Calu3 (cell line): ENCODE measurements at regions of chr6 and their contacts with region 1.

Region 1: GRCh38 chr6:7238900-7239589 is 74.0 kb downstream of the SSR1 start:
- DNase-seq: peak; percentile 86
- H3K4me3 Mint-ChIP-seq: no peak overlapping the region
- H3K27ac Mint-ChIP-seq: no peak overlapping the region
- H3K4me1 Mint-ChIP-seq: peaks cover 72% of the 10 kb centered on the region
- H3K27me3 Mint-ChIP-seq: no peaks in the 10 kb centered on the region
- CTCF ChIP-seq: no peak

Region 2: DNA sequence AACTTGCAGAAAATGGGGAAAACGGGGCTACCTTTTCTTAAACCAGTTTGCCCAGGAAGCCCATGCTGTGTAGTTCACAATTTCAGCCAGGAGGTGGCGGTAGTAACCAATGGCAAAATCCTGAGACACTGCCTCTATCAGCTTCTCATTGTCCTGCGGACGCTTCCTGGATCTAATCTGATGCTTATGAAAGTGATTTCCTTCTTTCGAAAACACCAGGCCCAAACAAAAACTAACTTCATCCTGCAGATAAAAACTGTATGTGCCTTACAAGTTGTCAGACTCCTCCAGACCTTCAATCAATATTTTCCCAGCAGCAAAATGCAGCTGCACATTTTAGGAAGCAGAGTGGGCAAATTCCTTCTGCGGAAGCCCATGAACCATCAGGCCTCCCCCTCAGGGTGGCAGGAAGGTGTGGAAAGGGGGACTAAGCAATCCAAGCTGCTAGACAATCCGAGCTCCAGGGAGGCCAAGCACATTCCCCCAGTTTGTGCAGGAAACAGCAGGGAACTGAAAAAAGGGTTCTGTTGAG is 562.1 kb before region 1 on chr6:
- CTCF ChIA-PET with region 1: interaction called, 3 read pairs
- intact Hi-C with region 1: loop called (anchors 5 kb)
- DNase-seq: peak; percentile 71
- H3K4me3 Mint-ChIP-seq: no peak overlapping the region
- H3K27ac Mint-ChIP-seq: no peak overlapping the region
- H3K4me1 Mint-ChIP-seq: peaks cover 20% of the 10 kb centered on the region
- H3K27me3 Mint-ChIP-seq: peaks cover 12% of the 10 kb centered on the region
- CTCF ChIP-seq: peak; percentile 76

Region 3: DNA sequence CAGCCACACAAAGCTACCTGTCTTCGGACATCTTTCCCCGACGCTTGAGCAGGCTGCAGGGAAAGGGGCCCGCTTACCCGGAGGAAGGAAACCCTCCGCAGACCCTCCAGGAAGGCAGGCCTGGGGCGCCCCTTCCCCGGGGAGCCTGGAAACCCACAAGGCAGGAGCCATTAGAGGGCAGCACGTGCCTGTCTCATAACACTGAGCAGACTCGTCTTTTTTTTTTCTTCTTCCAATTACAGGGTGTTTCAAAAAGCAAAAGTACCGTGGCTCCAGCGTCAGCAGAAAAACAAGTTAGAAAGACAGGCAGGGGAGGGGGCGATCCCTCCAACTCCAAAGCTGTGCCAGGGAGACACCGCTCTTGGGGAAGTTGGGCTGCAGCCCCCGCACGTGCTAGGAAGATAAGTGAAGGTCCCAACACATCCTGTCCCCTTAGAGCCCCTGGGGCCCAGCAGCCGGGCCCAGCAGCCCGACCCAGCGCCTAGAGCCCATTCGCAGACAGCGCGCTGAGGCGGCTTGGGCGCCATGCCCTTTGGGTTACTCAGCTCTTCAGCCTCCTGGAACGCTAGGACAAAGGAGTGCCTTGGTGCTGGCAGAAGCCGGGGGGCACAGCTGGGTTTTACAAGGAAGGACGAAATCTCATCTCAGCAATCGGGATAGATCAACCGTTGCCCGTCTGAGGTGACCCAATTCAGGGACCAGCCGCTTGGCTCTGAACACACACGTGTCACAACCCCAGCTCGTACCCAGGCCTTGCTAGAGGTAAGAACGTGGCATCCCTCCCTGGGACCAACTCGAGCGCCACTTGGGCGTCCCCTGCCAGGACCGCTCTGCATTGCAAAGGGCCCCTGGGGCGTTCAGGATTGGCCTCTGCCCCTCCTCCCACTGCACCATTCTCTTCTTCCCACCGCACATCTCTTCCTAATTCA is 514.2 kb before region 1 on chr6:
- CTCF ChIA-PET with region 1: interaction called, 6 read pairs
- intact Hi-C with region 1: loop called (anchors 5 kb)
- DNase-seq: peak; percentile 58
- H3K4me3 Mint-ChIP-seq: peak overlapping the region; percentile 62
- H3K27ac Mint-ChIP-seq: peak overlapping the region; percentile 77
- H3K4me1 Mint-ChIP-seq: peaks cover 37% of the 10 kb centered on the region
- H3K27me3 Mint-ChIP-seq: no peaks in the 10 kb centered on the region
- CTCF ChIP-seq: peak; percentile 47

Region 4: GRCh38 chr6:6811151-6812002 is 427.7 kb before region 1 on chr6:
- CTCF ChIA-PET with region 1: no interaction called
- intact Hi-C with region 1: loop called (anchors 10 kb)
- DNase-seq: peak; percentile 78
- H3K4me3 Mint-ChIP-seq: peak overlapping the region; percentile 63
- H3K27ac Mint-ChIP-seq: peak overlapping the region; percentile 99
- H3K4me1 Mint-ChIP-seq: peaks cover 34% of the 10 kb centered on the region
- H3K27me3 Mint-ChIP-seq: no peaks in the 10 kb centered on the region
- CTCF ChIP-seq: no peak

Region 5: DNA sequence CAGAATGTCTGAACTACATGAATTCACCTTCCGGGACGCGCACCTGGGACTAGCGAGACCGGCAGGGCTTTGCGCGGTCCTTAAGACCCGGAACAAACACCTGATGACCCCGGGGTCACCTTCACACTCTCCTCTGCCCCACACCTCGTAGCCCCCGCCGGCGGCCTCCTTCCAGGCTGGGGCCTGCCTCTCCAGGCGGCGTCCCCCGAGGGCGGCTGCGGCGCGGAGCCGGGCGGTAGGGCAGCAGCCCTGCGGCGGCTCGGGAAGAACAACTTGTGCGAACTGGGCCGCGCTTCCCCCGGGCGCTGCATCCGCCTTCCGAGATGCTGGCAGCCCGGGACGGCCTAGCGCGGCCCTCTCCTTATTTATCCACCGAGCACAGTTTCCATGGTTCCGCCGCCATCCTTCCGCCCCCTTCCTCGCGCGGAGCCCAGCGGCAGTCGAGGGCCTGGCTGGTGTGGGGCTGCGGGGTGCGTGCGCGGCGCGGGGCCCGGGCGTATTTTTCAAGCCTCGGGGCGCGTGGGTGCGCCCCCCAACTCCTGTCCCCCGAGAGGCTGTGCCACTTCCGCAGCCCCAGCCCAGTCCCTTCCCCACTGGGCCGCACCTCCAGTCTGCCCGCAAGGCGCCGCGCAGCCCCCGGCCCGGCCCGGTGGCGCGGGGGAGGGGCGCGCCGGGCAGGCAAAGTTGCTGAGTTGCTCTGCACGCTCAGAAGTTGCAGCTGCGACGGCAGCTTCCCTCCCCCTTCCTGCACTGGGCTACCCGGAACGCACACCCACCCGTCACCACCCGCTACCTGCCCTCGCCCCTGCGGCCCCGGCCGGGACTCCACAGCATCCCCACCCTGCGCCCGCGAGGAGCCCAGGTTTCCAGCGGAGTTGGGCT is 187.6 kb before region 1 on chr6:
- CTCF ChIA-PET with region 1: no interaction called
- intact Hi-C with region 1: loop called (anchors 5 kb)
- DNase-seq: peak; percentile 45
- H3K4me3 Mint-ChIP-seq: peak overlapping the region; percentile 60
- H3K27ac Mint-ChIP-seq: peak overlapping the region; percentile 80
- H3K4me1 Mint-ChIP-seq: peaks cover 11% of the 10 kb centered on the region
- H3K27me3 Mint-ChIP-seq: no peaks in the 10 kb centered on the region
- CTCF ChIP-seq: no peak

Region 6: DNA sequence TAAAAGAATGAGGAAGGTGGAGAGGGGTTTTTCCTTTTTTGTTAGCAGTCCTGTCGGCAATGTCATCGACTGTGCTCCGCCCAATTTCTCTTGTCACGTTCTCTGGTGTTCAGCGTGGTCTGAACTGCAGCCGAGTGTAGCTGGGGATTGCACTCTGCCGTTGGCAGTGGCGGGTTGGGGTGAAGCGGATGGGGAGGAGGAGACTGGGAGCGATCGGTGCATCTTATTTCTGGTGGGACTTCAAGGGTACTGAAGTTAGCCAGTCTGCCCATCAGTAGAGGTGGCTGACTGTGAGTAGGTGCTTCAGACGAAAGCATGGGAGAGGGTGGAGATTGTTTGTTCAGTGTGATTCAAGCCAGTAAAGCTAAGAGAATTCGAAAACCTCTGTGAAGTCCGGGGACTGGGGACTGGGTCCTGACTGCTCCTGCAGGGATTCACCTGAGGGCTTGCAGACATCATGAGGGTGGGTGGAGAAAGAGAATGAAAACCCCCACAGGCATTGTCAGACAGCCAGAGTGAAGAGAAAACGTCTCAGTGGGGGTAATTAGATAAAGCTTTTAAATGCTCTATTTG is 126.2 kb before region 1 on chr6:
- CTCF ChIA-PET with region 1: no interaction called
- intact Hi-C with region 1: loop called (anchors 5 kb)
- DNase-seq: peak; percentile 43
- H3K4me3 Mint-ChIP-seq: peak overlapping the region; percentile 77
- H3K27ac Mint-ChIP-seq: peak overlapping the region; percentile 77
- H3K4me1 Mint-ChIP-seq: peaks cover 28% of the 10 kb centered on the region
- H3K27me3 Mint-ChIP-seq: no peaks in the 10 kb centered on the region
- CTCF ChIP-seq: no peak

Region 7: GRCh38 chr6:7140631-7141378 is 98.2 kb before region 1 on chr6:
- CTCF ChIA-PET with region 1: interaction called, 4 read pairs
- intact Hi-C with region 1: loop called (anchors 10 kb)
- DNase-seq: peak; percentile 80
- H3K4me3 Mint-ChIP-seq: peak overlapping the region; percentile 64
- H3K27ac Mint-ChIP-seq: peak overlapping the region; percentile 71
- H3K4me1 Mint-ChIP-seq: peaks cover 33% of the 10 kb centered on the region
- H3K27me3 Mint-ChIP-seq: no peaks in the 10 kb centered on the region
- CTCF ChIP-seq: no peak

Region 8: DNA sequence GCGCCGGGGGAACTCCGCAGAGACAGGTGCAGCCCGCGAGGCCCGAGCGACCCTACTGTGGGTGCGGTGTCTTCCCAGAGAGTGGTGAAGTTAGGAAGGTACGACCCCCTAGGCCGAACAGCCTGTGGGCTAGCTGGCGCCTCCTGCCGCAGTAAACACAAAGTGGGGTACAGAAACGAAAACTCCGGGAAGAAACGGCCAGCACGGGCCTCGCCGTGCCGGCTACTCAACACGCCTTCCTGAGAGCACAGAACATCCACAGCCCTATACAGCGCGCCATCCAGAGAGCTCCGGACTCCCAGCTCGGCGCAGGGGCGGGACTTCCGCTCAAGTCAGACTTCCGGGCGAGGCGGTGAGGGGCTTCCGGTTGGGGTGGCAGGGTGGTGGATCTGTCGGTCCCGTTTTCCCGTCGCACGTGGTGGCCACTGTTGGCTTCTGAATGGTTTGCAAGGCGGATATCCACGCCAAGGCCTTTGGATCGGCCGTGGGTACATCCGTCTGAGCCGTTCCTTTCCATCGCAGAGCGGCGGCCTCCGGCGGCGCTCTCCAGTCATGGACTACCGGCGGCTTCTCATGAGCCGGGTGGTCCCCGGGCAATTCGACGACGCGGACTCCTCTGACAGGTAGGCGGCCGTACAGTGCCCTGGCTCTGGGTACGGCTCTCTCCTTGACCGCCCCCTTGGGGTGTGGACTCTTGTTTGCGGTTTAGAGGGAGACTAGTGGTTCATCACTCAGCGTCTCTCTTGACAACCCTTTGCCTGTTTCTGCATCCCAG is 150.6 kb after region 1 on chr6 and contains the starts of genes CAGE1 and RIOK1:
- CTCF ChIA-PET with region 1: no interaction called
- intact Hi-C with region 1: no loop called
- DNase-seq: peak; percentile 92
- H3K4me3 Mint-ChIP-seq: peak within 1 kb of the TSS; percentile 77
- H3K27ac Mint-ChIP-seq: peak within 1 kb of the TSS; percentile 28
- H3K4me1 Mint-ChIP-seq: peaks cover 33% of the 10 kb centered on the region
- H3K27me3 Mint-ChIP-seq: no peaks in the 10 kb centered on the region
- CTCF ChIP-seq: no peak
- total RNA-seq, gene CAGE1: not detected in 2 replicates
- total RNA-seq, gene RIOK1: 13.3 and 16.1 TPM in 2 replicates